Ascending aorta (tissue), 2 donors: ENCODE measurements at regions of chr18 and their contacts with region 1.

Region 1: DNA sequence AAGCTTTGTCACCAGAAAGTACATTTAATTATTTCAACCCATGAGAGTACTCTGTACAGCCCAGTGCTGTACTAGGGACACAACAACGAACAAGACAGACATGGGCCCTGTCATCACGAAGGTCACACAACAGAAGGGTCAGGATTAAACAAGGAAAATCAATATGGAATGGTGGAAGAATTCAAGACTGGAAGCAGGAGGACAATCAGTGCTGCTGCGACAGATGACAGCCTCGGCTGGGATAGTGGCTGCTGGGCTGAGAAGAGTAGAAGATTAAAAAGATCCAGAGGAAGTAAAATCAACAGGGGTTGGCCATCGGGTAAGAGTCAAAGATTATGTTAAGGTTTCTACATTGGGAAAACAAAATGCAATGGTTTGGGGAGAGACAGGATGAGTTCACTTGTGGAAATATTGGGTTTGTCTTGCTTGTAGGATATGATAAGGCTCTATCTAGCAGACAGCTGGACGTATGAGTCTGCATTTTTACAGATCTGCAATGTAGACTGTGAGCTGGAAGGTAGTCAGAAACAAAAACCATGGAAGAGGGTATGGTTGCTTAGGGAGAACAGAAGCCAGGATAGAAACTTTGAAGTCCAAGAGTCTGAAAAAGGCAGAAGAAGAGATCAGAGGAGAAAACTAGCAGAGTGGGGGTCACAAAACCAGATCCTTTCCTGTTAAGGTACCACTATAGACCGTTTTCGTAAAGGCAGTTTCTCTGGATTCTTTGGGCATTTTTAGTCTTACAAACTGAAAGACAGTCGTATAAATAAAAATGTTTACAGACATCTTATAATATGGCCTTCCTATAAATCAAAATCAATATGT is 84.1 kb downstream of the PRELID3A start:
- DNase-seq: no peak
- H3K4me3 ChIP-seq: no peak overlapping the region
- H3K27ac ChIP-seq: no peak overlapping the region
- H3K4me1 ChIP-seq: no peaks in the 10 kb centered on the region
- H3K27me3 ChIP-seq: no peaks in the 10 kb centered on the region
- CTCF ChIP-seq: no peak

Region 2: GRCh38 chr18:12520442-12520992 is 28.7 kb after region 1 on chr18:
- intact Hi-C with region 1: loop called (anchors 5 kb)
- DNase-seq: no peak
- H3K4me3 ChIP-seq: no peak overlapping the region
- H3K27ac ChIP-seq: peak overlapping the region in 1 of 2 donors; percentile 35
- H3K4me1 ChIP-seq: peaks cover 5 to 19% of the 10 kb centered on the region in 2 donors
- H3K27me3 ChIP-seq: no peaks in the 10 kb centered on the region
- CTCF ChIP-seq: no peak